HCT116 (cell line): ENCODE measurements at regions of chr6 and their contacts with region 1.

Region 1: DNA sequence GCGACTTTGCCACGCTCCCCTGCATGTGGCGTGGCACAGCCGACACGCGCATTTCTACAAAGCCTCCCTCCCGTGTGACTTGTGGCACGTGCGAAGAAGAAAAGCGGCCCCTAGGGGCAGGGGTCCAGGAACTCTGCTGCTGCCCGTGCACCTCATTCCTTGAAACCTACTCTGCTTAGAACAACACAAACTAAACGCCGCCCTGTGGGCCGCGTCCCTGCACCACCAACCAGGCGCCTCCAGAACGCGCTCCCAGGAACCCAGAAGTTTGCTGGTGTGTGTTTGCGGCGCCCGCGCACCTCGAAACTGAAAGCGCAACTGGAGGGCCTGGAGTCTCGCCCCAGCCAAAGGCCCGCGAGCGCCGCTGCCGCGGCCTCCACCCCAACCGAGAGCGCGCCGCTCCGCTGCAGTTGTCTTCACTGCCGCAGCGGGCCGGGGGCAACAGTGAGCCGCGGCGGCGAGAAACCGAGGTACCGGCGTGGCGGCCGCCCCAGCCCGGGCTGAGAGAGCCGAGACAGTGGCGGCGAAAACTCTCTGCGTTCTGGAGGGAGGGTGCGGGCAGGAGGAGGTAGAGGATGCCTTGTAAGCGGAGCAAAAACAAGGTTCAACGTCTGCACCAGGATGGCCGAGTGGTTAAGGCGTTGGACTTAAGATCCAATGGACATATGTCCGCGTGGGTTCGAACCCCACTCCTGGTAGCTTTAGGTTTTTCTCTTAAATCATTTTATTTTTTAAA is 65.8 kb downstream of the STX11 start:
- DNase-seq: peak; percentile 91
- ATAC-seq: peak; percentile 87
- H3K4me3 ChIP-seq: peak overlapping the region; percentile 45 to 58
- H3K27ac ChIP-seq: peak overlapping the region; percentile 61
- H3K4me1 ChIP-seq: peaks cover 7 to 22% of the 10 kb centered on the region in 2 experiments; a peak in 3 of 4 replicates
- H3K27me3 ChIP-seq: no peaks in the 10 kb centered on the region
- CTCF ChIP-seq: peak; percentile 59 to 64 (median 63); a peak in 5 of 6 replicates
- POLR2A ChIP-seq: no peak
- RAD21 ChIP-seq: peak; percentile 69

Region 2: GRCh38 chr6:143999406-143999805 is 216.7 kb before region 1 on chr6:
- CTCF ChIA-PET with region 1: no interaction called
- POLR2A ChIA-PET with region 1: no interaction called
- RAD21 ChIA-PET with region 1: no interaction called
- intact Hi-C with region 1: no loop called
- DNase-seq: no peak
- ATAC-seq: no peak
- H3K4me3 ChIP-seq: no peak overlapping the region
- H3K27ac ChIP-seq: no peak overlapping the region
- H3K4me1 ChIP-seq: no peaks in the 10 kb centered on the region
- H3K27me3 ChIP-seq: no peaks in the 10 kb centered on the region
- CTCF ChIP-seq: no peak
- POLR2A ChIP-seq: no peak
- RAD21 ChIP-seq: no peak

Region 3: DNA sequence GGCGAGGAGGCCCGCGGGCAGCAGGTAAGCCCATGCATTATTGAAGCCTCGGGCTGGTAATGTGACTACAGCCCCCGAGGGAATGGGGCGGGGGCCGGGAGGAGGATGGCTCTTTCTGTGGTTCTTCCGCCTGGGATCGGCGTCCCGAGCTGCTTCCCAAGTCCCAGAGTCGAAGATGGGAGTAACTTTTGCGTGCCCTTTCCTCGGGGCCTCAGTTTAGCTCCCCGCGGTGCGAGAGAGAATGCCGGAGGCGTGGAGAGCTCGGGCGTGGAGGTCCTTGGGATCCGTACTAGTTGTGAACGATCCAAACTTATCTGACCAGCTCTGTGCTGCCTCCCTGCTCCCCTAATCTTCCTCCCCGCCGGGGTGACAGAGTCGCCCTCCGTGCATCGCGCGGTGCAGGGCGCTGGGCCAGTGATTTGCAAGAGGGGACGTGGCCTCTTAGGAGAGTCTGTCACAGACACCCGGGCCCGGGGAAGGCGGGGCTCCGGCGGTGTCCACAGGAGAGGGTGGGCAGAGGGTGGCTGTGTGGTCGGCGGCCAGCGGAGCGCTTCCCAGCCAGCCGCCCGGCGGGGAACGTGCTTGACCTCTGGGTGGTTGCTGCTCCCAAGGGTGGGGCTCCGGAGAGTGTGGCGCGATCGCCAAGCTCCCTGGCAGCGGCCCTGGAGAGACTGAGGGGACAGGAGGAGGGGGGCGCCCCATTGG is 69.8 kb after region 1 on chr6:
- CTCF ChIA-PET with region 1: interaction called, 3 read pairs
- POLR2A ChIA-PET with region 1: no interaction called
- RAD21 ChIA-PET with region 1: interaction called in 1 of 2 experiments, 3 read pairs
- intact Hi-C with region 1: loop called (anchors 2 kb)
- DNase-seq: no peak
- ATAC-seq: peak; percentile 52
- H3K4me3 ChIP-seq: peak overlapping the region; percentile 79 to 89
- H3K27ac ChIP-seq: peak overlapping the region; percentile 65
- H3K4me1 ChIP-seq: peaks cover 14 to 16% of the 10 kb centered on the region in 2 experiments
- H3K27me3 ChIP-seq: no peaks in the 10 kb centered on the region
- CTCF ChIP-seq: no peak
- POLR2A ChIP-seq: no peak
- RAD21 ChIP-seq: no peak

Region 4: DNA sequence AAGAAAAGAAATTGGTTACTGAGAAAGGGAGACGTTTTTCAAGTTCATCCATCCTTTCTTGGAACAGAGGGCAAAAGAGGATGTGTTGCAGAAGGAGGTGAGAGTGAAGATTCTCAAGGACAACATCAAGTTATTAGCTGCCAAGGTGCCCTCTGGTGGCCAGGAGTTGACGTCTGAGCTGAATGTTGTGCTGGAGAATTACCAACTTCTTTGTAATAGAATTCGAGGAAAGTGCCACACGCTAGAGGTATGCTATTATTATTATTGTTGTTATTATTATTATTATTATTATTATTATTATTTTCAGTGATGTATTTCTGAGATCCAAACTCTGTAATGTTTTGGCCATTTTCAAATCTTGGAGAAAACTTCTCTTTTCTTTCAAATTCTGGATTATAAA is 266.0 kb after region 1 on chr6:
- CTCF ChIA-PET with region 1: interaction called, 9 read pairs
- POLR2A ChIA-PET with region 1: no interaction called
- RAD21 ChIA-PET with region 1: no interaction called
- intact Hi-C with region 1: loop called (anchors 2 kb)
- DNase-seq: peak; percentile 60
- ATAC-seq: peak; percentile 87
- H3K4me3 ChIP-seq: no peak overlapping the region
- H3K27ac ChIP-seq: no peak overlapping the region
- H3K4me1 ChIP-seq: no peaks in the 10 kb centered on the region
- H3K27me3 ChIP-seq: no peaks in the 10 kb centered on the region
- CTCF ChIP-seq: peak; percentile 62 to 75 (median 70)
- POLR2A ChIP-seq: no peak
- RAD21 ChIP-seq: peak; percentile 86

Region 5: DNA sequence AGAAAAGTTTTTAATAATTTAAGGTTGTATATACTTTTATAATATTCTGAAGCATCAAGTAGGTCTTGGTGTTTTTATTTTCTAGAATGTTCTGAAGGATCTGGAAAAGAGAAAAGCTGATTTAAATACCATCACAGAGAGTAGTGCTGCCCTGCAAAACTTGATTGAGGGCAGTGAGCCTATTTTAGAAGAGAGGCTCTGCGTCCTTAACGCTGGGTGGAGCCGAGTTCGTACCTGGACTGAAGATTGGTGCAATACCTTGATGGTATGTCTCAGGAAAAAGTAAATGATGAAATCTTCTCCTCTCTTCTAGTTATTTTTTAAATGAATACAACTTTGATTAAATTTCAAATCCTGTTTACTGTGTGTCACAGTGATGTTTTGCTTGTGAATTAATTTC is 294.8 kb after region 1 on chr6:
- CTCF ChIA-PET with region 1: no interaction called
- POLR2A ChIA-PET with region 1: no interaction called
- RAD21 ChIA-PET with region 1: no interaction called
- intact Hi-C with region 1: no loop called
- DNase-seq: no peak
- ATAC-seq: no peak
- H3K4me3 ChIP-seq: no peak overlapping the region
- H3K27ac ChIP-seq: no peak overlapping the region
- H3K4me1 ChIP-seq: no peaks in the 10 kb centered on the region
- H3K27me3 ChIP-seq: no peaks in the 10 kb centered on the region
- CTCF ChIP-seq: no peak
- POLR2A ChIP-seq: no peak
- RAD21 ChIP-seq: no peak